Naive thymus-derived CD4-positive, alpha-beta T cell (primary cell): ENCODE measurements at regions of chr11 and their contacts with region 1.

Region 1: DNA sequence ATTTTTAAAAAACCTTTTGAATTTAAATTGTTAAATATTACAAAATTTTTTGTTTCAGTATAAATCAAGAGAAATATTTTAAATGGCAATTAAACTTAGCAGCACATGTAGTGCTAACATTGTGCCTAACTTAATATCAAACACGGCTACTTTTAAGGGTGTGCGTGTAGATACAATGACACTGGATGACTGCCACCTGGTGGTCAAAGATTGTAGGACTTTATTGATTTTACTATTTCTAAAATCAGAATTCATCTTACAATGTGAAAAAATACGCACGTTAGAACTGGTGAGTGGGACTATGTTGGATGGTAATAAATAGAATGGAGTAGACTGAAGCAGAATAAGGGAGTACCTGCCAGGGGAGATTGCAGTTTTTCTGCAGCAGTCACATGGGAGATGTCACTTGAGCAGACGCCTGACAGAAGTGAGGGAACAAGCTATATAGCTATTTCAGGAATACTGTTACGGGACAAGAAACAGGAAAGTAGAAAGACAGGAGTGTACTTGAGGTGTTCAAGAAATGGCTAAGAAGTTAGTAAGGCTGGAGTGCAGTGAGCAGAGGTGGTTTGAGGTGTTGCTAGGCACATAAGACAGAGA is 52.9 kb downstream of the UVRAG start:
- DNase-seq: peak in 7 of 9 donors; percentile 32 to 62 (median 50)
- ATAC-seq: peak; percentile 80
- H3K4me3 ChIP-seq: no peak overlapping the region
- H3K4me3 Mint-ChIP-seq: no peak overlapping the region
- H3K27ac ChIP-seq: no peak overlapping the region
- H3K27ac Mint-ChIP-seq: no peak overlapping the region
- H3K4me1 ChIP-seq: peaks cover 0 to 2% of the 10 kb centered on the region in 2 donors
- H3K4me1 Mint-ChIP-seq: peaks cover 4 to 15% (median 8%) of the 10 kb centered on the region in 7 donors
- H3K27me3 ChIP-seq: no peaks in the 10 kb centered on the region
- H3K27me3 Mint-ChIP-seq: no peaks in the 10 kb centered on the region

Region 2: GRCh38 chr11:75706260-75706729 is 161.6 kb before region 1 on chr11:
- CTCF ChIA-PET with region 1: no interaction called
- POLR2A ChIA-PET with region 1: no interaction called
- intact Hi-C with region 1: loop called in 1 of 2 experiments (anchors 5 kb)
- DNase-seq: peak; percentile 19 to 65 (median 53)
- ATAC-seq: peak; percentile 92
- H3K4me3 ChIP-seq: no peak overlapping the region
- H3K4me3 Mint-ChIP-seq: peak overlapping the region in 3 of 10 donors; percentile 23 to 57 (median 53)
- H3K27ac ChIP-seq: no peak overlapping the region
- H3K27ac Mint-ChIP-seq: no peak overlapping the region
- H3K4me1 ChIP-seq: no peaks in the 10 kb centered on the region
- H3K4me1 Mint-ChIP-seq: peaks cover 7 to 17% (median 11%) of the 10 kb centered on the region in 7 donors
- H3K27me3 ChIP-seq: no peaks in the 10 kb centered on the region
- H3K27me3 Mint-ChIP-seq: peaks cover 0 to 20% (median 0%) of the 10 kb centered on the region in 5 donors

Region 3: GRCh38 chr11:75721855-75722668 is 145.8 kb before region 1 on chr11:
- CTCF ChIA-PET with region 1: no interaction called
- POLR2A ChIA-PET with region 1: no interaction called
- intact Hi-C with region 1: loop called (anchors 1 kb)
- DNase-seq: no peak
- ATAC-seq: no peak
- H3K4me3 ChIP-seq: no peak overlapping the region
- H3K4me3 Mint-ChIP-seq: no peak overlapping the region
- H3K27ac ChIP-seq: no peak overlapping the region
- H3K27ac Mint-ChIP-seq: no peak overlapping the region
- H3K4me1 ChIP-seq: no peaks in the 10 kb centered on the region
- H3K4me1 Mint-ChIP-seq: peaks cover 0 to 5% (median 0%) of the 10 kb centered on the region in 7 donors
- H3K27me3 ChIP-seq: no peaks in the 10 kb centered on the region
- H3K27me3 Mint-ChIP-seq: peaks cover 0 to 1% (median 0%) of the 10 kb centered on the region in 5 donors

Region 4: GRCh38 chr11:75802913-75803820 is 64.7 kb before region 1 on chr11:
- CTCF ChIA-PET with region 1: interaction called, 118 read pairs
- POLR2A ChIA-PET with region 1: interaction called, 3 read pairs
- intact Hi-C with region 1: loop called (anchors 1 kb)
- DNase-seq: peak; percentile 39 to 67 (median 54)
- ATAC-seq: peak; percentile 91
- H3K4me3 ChIP-seq: no peak overlapping the region
- H3K4me3 Mint-ChIP-seq: no peak overlapping the region
- H3K27ac ChIP-seq: no peak overlapping the region
- H3K27ac Mint-ChIP-seq: no peak overlapping the region
- H3K4me1 ChIP-seq: peaks cover 0 to 14% of the 10 kb centered on the region in 2 donors
- H3K4me1 Mint-ChIP-seq: peaks cover 0 to 22% (median 11%) of the 10 kb centered on the region in 7 donors
- H3K27me3 ChIP-seq: no peaks in the 10 kb centered on the region
- H3K27me3 Mint-ChIP-seq: no peaks in the 10 kb centered on the region

Region 5: GRCh38 chr11:76768088-76768908 is 900.4 kb after region 1 on chr11:
- CTCF ChIA-PET with region 1: no interaction called
- POLR2A ChIA-PET with region 1: no interaction called
- intact Hi-C with region 1: no loop called
- DNase-seq: peak in 4 of 9 donors; percentile 7 to 27 (median 15)
- ATAC-seq: peak; percentile 86
- H3K4me3 ChIP-seq: no peak overlapping the region
- H3K4me3 Mint-ChIP-seq: peak overlapping the region in 7 of 10 donors; percentile 13 to 71 (median 48)
- H3K27ac ChIP-seq: no peak overlapping the region
- H3K27ac Mint-ChIP-seq: peak overlapping the region in 7 of 9 donors; percentile 7 to 87 (median 70)
- H3K4me1 ChIP-seq: peaks cover 7 to 9% of the 10 kb centered on the region in 2 donors
- H3K4me1 Mint-ChIP-seq: peaks cover 6 to 49% (median 21%) of the 10 kb centered on the region in 7 donors
- H3K27me3 ChIP-seq: no peaks in the 10 kb centered on the region
- H3K27me3 Mint-ChIP-seq: peaks cover 0 to 7% (median 2%) of the 10 kb centered on the region in 5 donors